ENCODE measurements at regions of chr14 and their contacts with region 1.

Region 1: DNA sequence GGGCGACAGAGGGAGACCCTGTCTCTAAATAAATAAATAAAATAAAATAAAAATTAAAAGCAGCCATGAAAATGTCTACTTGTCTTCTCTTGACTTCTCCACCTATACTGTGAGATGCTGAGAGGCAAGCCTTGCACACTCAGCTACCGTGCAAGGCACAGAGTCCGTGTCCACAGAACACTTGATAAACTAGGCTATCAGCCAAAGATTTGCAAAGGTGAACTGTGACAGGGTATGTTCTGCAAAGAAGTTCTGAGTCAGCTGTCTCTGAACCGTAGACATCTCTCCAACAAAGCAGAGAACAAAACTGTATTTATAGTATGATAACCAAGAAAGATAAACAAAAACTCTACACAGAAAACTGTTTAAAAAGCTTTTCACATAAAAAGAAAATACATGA is 35.5 kb downstream of the STXBP6 start:
- DNase-seq: no peak
- ATAC-seq: peak; percentile 37
- H3K4me3 ChIP-seq: no peak overlapping the region
- H3K27ac ChIP-seq: no peak overlapping the region
- H3K4me1 ChIP-seq: no peaks in the 10 kb centered on the region
- H3K27me3 ChIP-seq: no peaks in the 10 kb centered on the region
- CTCF ChIP-seq: no peak
- EP300 ChIP-seq: no peak
- POLR2A ChIP-seq: no peak
- RAD21 ChIP-seq: no peak

Region 2: GRCh38 chr14:24959791-24960331 is 54.6 kb before region 1 on chr14:
- CTCF ChIA-PET with region 1: interaction called, 3 read pairs
- POLR2A ChIA-PET with region 1: no interaction called
- RAD21 ChIA-PET with region 1: interaction called, 4 read pairs
- SMC1A ChIA-PET with region 1: interaction called, 12 read pairs
- in situ Hi-C with region 1: no loop called
- intact Hi-C with region 1: no loop called
- DNase-seq: no peak
- ATAC-seq: peak; percentile 77
- H3K4me3 ChIP-seq: no peak overlapping the region
- H3K27ac ChIP-seq: 0 out of 2 replicates have a peak overlapping the region, but pooled peaks have one; percentile 31
- H3K4me1 ChIP-seq: peaks cover under 1% of the 10 kb centered on the region
- H3K27me3 ChIP-seq: no peaks in the 10 kb centered on the region
- CTCF ChIP-seq: no peak
- EP300 ChIP-seq: peak in 1 of 2 experiments; percentile 27; a peak in 1 of 4 replicates
- POLR2A ChIP-seq: no peak
- RAD21 ChIP-seq: no peak

Region 3: GRCh38 chr14:25048170-25049016 is 34.0 kb after region 1 on chr14:
- CTCF ChIA-PET with region 1: no interaction called
- POLR2A ChIA-PET with region 1: no interaction called
- RAD21 ChIA-PET with region 1: no interaction called
- SMC1A ChIA-PET with region 1: interaction called, 10 read pairs
- in situ Hi-C with region 1: no loop called
- intact Hi-C with region 1: no loop called
- DNase-seq: no peak
- ATAC-seq: peak; percentile 25
- H3K4me3 ChIP-seq: no peak overlapping the region
- H3K27ac ChIP-seq: no peak overlapping the region
- H3K4me1 ChIP-seq: no peaks in the 10 kb centered on the region
- H3K27me3 ChIP-seq: peaks cover 0 to 12% of the 10 kb centered on the region in 2 experiments; a peak in 1 of 4 replicates
- CTCF ChIP-seq: no peak
- EP300 ChIP-seq: no peak
- POLR2A ChIP-seq: no peak
- RAD21 ChIP-seq: no peak

Measured in GM12878 (cell line).